A549 (cell line): ENCODE measurements at regions of chr3 and their contacts with region 1.

Region 1: DNA sequence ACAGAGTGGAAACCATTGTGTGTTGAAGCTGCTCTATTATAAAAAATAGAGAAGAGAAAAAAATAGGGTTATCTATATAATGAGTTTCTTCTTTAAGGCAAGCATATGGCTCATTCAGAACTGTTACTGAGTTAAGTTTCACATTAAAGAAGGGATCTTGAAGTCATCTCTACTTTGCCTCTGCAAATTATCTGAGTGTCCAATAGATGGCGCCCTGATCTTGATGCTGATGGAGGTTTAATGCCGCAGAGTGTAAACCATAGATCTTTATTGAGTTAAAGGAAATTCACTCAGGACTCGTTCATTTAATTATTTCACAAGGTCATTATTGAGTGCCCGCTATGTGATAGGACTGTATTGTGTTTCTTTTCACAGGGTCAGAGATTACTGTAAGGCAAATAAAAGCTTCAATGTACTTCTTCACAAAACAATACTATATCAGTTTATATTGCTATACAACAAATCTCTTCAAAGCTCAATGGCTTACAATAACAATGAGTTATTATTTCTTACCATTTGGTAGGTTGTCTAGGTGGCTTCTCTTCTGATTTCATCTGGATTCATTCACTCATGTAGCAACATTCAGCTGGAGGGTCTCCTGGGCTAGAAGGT is 171.4 kb downstream of the NSUN3 start:
- DNase-seq: peak; percentile 36 to 60
- ATAC-seq: peak in 1 of 2 experiments; percentile 87; a peak in 3 of 6 replicates
- H3K4me3 ChIP-seq: no peak overlapping the region
- H3K27ac ChIP-seq: no peak overlapping the region
- H3K4me1 ChIP-seq: no peaks in the 10 kb centered on the region
- CTCF ChIP-seq: peak; percentile 59
- EP300 ChIP-seq: no peak
- POLR2A ChIP-seq: no peak
- RAD21 ChIP-seq: peak; percentile 53 to 61

Region 2: GRCh38 chr3:94221829-94222228 is 12.5 kb before region 1 on chr3:
- CTCF ChIA-PET with region 1: interaction called, 12 read pairs
- POLR2A ChIA-PET with region 1: no interaction called
- DNase-seq: no peak
- ATAC-seq: no peak
- H3K4me3 ChIP-seq: no peak overlapping the region
- H3K27ac ChIP-seq: no peak overlapping the region
- H3K4me1 ChIP-seq: no peaks in the 10 kb centered on the region
- CTCF ChIP-seq: no peak
- EP300 ChIP-seq: no peak
- POLR2A ChIP-seq: no peak
- RAD21 ChIP-seq: no peak